ENCODE measurements at regions of chr6 and their contacts with region 1.

Region 1: GRCh38 chr6:158926416-158926815 is 73.6 kb downstream of the RSPH3 start:
- DNase-seq: no peak
- H3K4me3 ChIP-seq: no peak overlapping the region
- H3K27ac ChIP-seq: no peak overlapping the region
- H3K4me1 ChIP-seq: no peaks in the 10 kb centered on the region
- H3K27me3 ChIP-seq: no peaks in the 10 kb centered on the region
- CTCF ChIP-seq: no peak

Region 2: DNA sequence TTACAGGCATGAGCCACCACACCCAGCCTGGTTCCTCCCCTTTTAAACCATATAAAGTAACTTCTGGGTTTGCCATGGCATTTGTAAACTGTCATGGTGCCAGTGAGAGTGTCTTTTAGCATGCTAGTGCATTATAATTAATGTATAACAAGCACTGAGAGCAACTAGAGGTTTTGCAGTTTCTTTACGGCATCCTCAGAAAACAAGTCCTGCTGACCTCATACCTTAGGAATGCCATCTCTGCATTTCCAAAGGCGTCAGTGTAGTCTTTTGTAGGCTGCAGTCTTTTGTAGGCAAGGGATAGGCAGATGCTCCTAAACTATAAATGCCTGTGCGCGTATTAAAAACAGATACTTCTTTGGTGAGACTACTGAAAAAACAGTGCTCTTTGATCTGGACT is 32.2 kb before region 1 on chr6:
- CTCF ChIA-PET with region 1: interaction called, 12 read pairs
- POLR2A ChIA-PET with region 1: no interaction called
- intact Hi-C with region 1: no loop called
- DNase-seq: peak; percentile 81
- H3K4me3 ChIP-seq: no peak overlapping the region
- H3K27ac ChIP-seq: no peak overlapping the region
- H3K4me1 ChIP-seq: peaks cover 5% of the 10 kb centered on the region
- H3K27me3 ChIP-seq: no peaks in the 10 kb centered on the region
- CTCF ChIP-seq: no peak

Region 3: DNA sequence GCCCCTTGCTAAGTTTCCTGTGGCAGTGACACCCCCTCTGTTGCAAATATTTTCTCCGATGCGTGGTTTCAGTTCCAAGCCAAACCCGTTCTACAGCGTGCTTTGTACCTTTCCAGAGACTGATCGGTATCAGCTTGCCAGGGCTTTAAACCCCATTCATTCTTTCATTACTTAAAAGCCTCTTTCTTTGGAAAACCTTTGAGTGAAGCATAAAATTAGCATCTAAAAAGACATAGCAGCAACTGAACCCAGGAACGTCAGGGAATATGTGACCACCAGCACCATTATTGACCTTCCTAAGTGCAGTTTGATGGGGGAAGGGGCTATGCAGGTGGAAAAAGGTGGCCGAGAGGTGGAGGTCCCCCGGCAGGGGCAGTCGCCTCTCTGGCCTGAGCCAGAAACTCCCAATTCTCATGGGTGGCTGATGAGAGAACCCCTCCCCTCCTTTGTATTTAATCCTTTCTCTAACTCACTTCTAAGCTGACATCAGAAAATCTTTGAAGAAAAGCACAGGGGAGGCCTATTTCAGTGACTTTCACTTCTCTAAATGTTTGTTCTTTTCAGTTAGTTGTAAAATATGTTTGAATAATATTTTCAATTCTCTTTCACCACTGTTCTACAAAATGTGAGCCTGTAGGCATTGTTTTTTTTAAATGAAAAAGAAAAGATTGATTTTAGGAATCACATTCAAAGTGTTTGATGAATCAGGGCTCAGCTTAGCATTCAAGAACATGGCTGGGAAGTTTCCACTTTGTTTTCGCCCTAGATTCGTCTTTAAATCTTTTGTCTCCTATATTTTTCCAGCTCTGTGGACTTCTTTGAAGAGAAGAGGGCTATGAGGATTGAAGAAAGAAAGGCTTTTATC is 15.7 kb before region 1 on chr6:
- CTCF ChIA-PET with region 1: no interaction called
- POLR2A ChIA-PET with region 1: no interaction called
- intact Hi-C with region 1: no loop called
- DNase-seq: no peak
- H3K4me3 ChIP-seq: no peak overlapping the region
- H3K27ac ChIP-seq: no peak overlapping the region
- H3K4me1 ChIP-seq: no peaks in the 10 kb centered on the region
- H3K27me3 ChIP-seq: no peaks in the 10 kb centered on the region
- CTCF ChIP-seq: no peak

Region 4: GRCh38 chr6:159349915-159350314 is 423.5 kb after region 1 on chr6:
- CTCF ChIA-PET with region 1: no interaction called
- POLR2A ChIA-PET with region 1: no interaction called
- intact Hi-C with region 1: no loop called
- DNase-seq: no peak
- H3K4me3 ChIP-seq: no peak overlapping the region
- H3K27ac ChIP-seq: no peak overlapping the region
- H3K4me1 ChIP-seq: no peaks in the 10 kb centered on the region
- H3K27me3 ChIP-seq: no peaks in the 10 kb centered on the region
- CTCF ChIP-seq: no peak

Measured in A673 (cell line).